Activated B cell treated with CpG ODN at 0.5 μM for 24 hours (primary cell): ENCODE measurements at regions of chr10 and their contacts with region 1.

Region 1: DNA sequence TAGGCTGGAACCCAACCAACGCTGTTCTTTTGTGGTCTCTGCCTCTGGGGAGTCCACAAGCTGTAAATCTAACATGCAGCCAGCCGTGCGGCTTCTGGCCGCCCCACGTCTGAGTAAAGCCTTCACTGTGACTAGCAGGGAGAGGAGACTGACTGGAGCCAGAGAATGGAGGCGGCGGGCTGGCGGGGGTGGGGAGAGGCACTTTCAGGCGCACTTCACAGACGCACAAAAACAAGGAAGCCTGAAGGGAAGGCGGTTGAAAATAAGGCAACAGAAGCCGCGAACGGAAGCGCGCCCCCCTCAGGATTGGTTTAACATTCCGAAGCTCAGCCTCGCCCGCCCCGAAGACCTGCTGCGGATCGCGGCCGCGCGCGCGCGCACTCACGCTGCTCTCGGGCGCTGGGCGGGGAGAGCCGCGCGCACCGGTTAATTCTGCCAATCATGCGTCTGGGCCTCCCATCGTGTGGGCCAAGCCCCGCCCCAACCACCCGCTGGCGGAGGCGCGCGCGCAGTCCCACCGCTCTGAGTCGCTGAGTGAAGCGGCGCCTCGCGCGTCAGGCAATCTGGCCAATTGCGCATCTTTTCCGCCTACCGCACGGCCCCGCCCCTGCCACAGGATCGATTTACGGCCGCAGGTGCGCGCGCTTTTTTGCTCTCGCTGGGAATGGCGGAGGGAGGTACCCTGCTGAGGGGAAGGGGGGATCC is at the start of gene SFR1:
- DNase-seq: peak; percentile 97
- ATAC-seq: peak; percentile 89
- H3K4me3 Mint-ChIP-seq: peak within 1 kb of the TSS; percentile 92
- H3K27ac Mint-ChIP-seq: peak within 1 kb of the TSS; percentile 99
- H3K4me1 Mint-ChIP-seq: peaks cover 25% of the 10 kb centered on the region
- H3K27me3 Mint-ChIP-seq: no peaks in the 10 kb centered on the region
- CTCF ChIP-seq: no peak
- total RNA-seq, gene SFR1: 12.3 TPM in 2 replicates

Region 2: DNA sequence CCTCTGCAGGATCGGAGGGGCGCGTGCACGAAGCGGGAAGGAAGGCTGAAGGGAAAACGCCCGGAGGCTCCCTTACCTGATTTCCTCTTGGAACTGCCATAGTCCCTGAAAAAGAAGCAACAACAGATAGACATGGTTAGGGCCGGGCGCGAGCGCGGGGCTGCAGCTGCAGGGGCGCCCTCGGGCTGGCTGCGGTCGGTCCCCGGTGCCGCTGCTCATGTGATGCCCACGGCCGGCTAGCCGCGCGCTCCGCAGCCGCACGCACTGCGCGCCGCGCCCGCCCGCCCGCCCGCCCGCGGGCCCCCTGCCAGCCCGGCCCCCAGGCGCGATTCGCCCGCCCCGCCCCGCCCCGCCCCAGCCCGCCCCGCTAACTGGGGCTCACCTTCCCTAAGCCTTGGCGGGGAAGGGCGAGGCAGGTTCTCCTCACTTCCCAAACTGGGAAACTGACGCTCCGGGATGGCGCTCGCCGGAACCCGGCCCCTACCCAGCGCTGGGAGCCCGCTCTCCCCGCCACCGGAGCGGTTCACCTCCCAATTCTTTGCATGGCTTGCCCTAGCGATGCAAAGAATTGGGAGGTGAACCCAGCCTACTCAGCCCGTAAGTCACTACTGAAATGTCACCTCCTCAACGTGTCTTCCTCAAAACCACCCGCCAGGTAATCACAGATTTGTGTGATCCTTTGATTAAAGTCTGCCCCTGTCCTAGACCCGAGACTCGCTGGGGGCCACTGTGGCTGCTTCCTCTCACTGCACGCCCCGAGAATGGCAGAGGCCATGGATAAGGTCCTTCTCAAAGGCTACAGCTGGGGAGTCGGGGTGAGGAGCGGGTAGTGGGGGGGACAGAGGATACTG is 428.5 kb before region 1 on chr10:
- CTCF ChIA-PET with region 1: no interaction called
- POLR2A ChIA-PET with region 1: interaction called, 3 read pairs
- intact Hi-C with region 1: loop called (anchors 1 kb)
- DNase-seq: peak; percentile 57
- ATAC-seq: peak; percentile 42
- H3K4me3 Mint-ChIP-seq: peak overlapping the region; percentile 90
- H3K27ac Mint-ChIP-seq: peak overlapping the region; percentile 71
- H3K4me1 Mint-ChIP-seq: peaks cover 51% of the 10 kb centered on the region
- H3K27me3 Mint-ChIP-seq: no peaks in the 10 kb centered on the region
- CTCF ChIP-seq: no peak

Region 3: GRCh38 chr10:103918053-103918846 is 203.4 kb before region 1 on chr10 and contains the start of gene STN1:
- CTCF ChIA-PET with region 1: interaction called, 3 read pairs
- POLR2A ChIA-PET with region 1: interaction called, 28 read pairs
- intact Hi-C with region 1: loop called (anchors 1 kb)
- DNase-seq: peak; percentile 91
- ATAC-seq: peak; percentile 94
- H3K4me3 Mint-ChIP-seq: peak within 1 kb of the TSS; percentile 93
- H3K27ac Mint-ChIP-seq: peak within 1 kb of the TSS; percentile 96
- H3K4me1 Mint-ChIP-seq: peaks cover 41% of the 10 kb centered on the region
- H3K27me3 Mint-ChIP-seq: no peaks in the 10 kb centered on the region
- CTCF ChIP-seq: no peak
- total RNA-seq, gene STN1: 14.0 and 14.2 TPM in 2 replicates

Region 4: DNA sequence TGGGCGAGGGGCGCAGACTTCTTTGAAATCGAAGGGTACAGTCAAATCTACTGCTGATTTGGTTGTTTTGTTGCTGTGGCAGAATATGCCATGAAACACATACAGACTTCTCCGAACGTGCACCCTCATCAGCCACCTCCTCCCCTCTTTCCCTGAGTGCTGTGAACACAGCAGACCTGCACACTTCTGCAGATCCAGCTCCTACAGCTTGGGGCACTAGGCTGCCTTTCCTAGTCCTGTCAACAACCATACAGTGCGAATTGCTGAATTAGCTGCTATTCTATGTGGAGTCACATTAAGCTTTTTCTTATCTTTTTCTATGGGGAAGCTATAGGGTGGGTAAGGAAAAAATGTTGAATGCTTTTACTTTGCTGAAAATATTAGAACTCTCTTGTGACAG is 93.5 kb before region 1 on chr10:
- CTCF ChIA-PET with region 1: interaction called, 6 read pairs
- POLR2A ChIA-PET with region 1: no interaction called
- intact Hi-C with region 1: loop called (anchors 5 kb)
- DNase-seq: no peak
- ATAC-seq: peak; percentile 34
- H3K4me3 Mint-ChIP-seq: no peak overlapping the region
- H3K27ac Mint-ChIP-seq: no peak overlapping the region
- H3K4me1 Mint-ChIP-seq: no peaks in the 10 kb centered on the region
- H3K27me3 Mint-ChIP-seq: no peaks in the 10 kb centered on the region
- CTCF ChIP-seq: no peak

Region 5: GRCh38 chr10:104254493-104255310 is 133.0 kb after region 1 on chr10 and contains the start of gene GSTO1:
- CTCF ChIA-PET with region 1: no interaction called
- POLR2A ChIA-PET with region 1: interaction called, 11 read pairs
- intact Hi-C with region 1: no loop called
- DNase-seq: peak; percentile 44
- ATAC-seq: peak; percentile 84
- H3K4me3 Mint-ChIP-seq: peak within 1 kb of the TSS; percentile 93
- H3K27ac Mint-ChIP-seq: peak within 1 kb of the TSS; percentile 88
- H3K4me1 Mint-ChIP-seq: peaks cover 37% of the 10 kb centered on the region
- H3K27me3 Mint-ChIP-seq: peaks cover 8% of the 10 kb centered on the region
- CTCF ChIP-seq: no peak
- total RNA-seq, gene GSTO1: 43.0 and 55.9 TPM in 2 replicates